SK-MEL-5 (cell line): ENCODE measurements at regions of chr5 and their contacts with region 1.

Region 1: DNA sequence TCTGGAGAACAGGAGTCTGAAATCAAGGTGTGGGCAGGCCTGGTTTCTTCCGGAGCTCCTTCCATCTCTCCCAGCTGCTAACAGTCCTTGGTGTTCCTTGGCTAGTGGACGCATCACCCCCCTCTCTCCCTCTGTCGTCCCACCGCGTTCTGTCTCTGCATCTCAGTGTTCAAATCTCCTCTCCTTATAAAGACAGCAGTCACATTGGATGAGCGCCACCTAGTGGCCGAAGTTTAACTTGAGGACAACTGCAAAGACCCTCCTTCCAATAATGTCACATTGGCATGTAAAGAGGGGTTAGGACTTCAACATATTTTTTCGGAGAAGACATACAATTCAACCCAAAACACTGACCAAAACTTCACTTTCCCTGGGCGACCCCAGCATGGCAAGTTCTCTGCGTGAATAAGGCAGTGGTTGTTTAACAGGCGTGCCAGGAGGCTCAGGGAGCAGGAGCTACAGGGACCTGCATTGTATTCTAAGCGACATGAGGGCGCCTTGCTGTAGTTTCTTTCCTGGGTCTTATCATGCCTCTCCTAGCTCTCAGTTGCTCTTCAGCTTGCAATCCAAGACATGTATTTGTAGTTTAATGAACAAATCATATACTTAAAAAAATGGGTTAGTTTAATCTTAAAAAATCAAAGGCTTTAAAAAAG is 27.9 kb upstream of the BASP1 start:
- DNase-seq: peak; percentile 95

Region 2: DNA sequence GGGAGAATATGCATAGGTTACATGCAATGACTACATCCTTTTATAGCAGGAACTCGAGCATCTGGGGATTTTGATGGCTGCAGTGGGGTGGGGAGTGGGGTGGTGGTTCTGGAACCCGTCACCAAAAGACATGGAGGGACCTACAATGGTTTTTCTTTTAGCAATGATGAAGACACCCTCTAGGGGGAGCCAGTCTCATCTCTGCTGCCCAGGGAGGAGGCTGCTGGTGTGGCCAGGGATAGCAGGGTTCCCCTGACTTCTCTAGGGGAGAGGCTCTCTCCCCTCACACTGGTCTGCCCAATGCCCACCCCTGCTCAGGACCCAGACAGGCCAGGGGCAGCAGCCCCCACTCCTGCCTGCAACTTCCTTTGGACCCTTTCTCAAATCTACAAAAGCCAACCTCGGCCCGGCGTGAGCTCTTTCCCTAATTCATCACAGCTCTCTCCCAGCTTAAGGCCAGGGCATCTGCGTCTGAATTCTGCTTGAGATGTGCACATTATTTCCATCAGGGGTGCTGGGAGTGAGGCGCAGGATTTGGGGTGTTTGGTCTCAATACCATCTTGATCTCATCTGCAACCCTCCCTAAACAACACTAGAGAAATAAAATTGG is 499.2 kb before region 1 on chr5:
- in situ Hi-C with region 1: loop called (anchors 10 kb)
- DNase-seq: peak; percentile 88

Region 3: DNA sequence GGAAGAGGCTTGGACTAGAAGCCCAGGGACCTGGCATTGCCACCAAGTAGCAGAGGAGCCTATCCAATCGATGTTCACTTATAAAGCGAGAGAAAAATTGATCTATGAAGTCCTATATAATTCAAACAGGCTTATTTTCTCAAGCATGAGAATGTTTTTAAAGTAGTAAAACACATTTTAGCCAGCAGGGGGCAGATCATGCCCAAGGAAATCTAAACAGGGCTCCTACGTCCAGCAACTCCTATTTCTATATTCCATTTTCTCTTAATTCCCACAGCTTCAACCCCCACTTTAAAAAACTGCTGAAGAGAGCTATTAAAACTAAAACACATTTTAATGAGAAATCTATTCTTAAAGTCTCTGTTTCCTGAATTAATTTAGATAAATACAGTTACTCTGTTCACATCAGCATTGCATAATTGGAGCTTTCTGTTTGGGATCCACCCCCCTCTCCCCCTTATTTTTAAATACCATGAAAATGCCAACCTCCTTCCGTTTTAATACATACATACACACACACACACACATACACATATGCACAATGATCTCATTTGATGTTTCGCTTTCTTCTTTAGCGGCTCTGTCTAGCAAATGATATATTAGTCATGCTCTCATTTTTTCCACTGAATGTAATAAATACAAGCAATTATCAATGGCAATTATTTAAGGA is 398.3 kb before region 1 on chr5:
- in situ Hi-C with region 1: loop called (anchors 25 kb)
- DNase-seq: peak; percentile 75

Region 4: DNA sequence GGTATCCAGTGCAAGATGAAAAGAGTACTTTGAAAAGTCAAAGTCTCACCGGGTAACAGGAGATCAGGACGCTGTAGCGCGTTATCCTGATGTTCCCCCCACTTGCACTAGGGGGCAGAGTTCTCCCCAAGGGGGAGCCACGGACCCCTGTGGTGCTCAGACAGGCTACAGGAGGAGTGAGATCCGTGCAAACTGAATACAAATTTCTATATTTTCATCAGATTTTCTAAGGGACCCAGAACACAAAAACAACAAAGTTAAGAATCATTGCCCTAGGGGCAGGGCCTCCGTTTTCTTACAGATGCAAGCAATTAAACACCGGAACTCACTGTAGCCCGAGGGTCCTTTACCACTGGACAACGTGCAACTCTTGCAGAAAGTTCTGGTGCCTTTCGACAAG is 255.4 kb before region 1 on chr5:
- in situ Hi-C with region 1: loop called (anchors 25 kb)
- DNase-seq: peak; percentile 93